BJ (cell line): ENCODE measurements at regions of chr18 and their contacts with region 1.

Region 1: GRCh38 chr18:59988098-59988706 is 88.4 kb downstream of the PMAIP1 start:
- DNase-seq: no peak
- H3K4me3 ChIP-seq: no peak overlapping the region
- H3K27me3 ChIP-seq: no peaks in the 10 kb centered on the region; the same call in 1 of the 2 replicates
- CTCF ChIP-seq: peak; percentile 90

Region 2: DNA sequence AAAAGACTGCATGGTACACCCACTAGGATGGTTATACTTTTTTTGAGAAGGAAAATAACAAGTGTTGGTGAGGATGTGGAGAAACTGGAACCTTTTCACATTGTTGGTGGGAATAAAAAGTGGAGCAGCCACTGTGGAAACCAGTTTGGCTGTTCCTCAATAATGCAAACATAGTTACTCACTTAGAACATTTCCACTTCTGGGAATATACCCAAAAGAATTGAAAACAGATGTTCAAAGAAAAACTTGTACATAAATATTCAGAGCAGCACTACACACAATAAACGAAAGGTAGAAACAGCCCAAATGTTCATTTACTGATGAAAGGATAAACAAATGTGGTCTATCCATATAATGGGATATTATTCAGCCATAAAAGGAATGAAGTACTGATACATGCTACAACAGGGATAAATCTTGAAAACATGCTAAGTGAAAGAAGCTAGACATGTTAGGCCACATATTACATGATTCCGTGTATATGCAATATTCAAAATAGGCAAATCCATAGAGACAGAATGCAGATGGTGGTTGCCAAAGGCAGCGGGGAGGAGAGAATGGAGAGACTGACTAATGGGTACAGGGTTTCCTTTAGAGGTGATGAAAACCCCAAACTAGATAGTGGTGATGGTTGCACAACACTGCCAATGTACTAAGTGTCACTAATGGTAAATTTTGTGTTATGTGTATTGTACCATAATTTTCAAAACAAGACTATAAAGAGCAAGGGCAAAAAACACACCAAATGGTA is 608.3 kb before region 1 on chr18:
- CTCF ChIA-PET with region 1: no interaction called
- POLR2A ChIA-PET with region 1: no interaction called
- DNase-seq: no peak
- H3K4me3 ChIP-seq: no peak overlapping the region
- H3K27me3 ChIP-seq: 0 out of 2 replicates have a peak, but pooled peaks cover 1% of the 10 kb centered on the region
- CTCF ChIP-seq: no peak

Region 3: GRCh38 chr18:60019463-60019840 is 31.2 kb after region 1 on chr18:
- CTCF ChIA-PET with region 1: no interaction called
- POLR2A ChIA-PET with region 1: no interaction called
- DNase-seq: peak; percentile 59
- H3K4me3 ChIP-seq: no peak overlapping the region
- H3K27me3 ChIP-seq: no peaks in the 10 kb centered on the region
- CTCF ChIP-seq: no peak

Region 4: GRCh38 chr18:60549338-60549960 is 561.2 kb after region 1 on chr18:
- CTCF ChIA-PET with region 1: interaction called, 93 read pairs
- POLR2A ChIA-PET with region 1: no interaction called
- DNase-seq: peak; percentile 22
- H3K4me3 ChIP-seq: no peak overlapping the region
- H3K27me3 ChIP-seq: no peaks in the 10 kb centered on the region
- CTCF ChIP-seq: peak; percentile 73

Region 5: DNA sequence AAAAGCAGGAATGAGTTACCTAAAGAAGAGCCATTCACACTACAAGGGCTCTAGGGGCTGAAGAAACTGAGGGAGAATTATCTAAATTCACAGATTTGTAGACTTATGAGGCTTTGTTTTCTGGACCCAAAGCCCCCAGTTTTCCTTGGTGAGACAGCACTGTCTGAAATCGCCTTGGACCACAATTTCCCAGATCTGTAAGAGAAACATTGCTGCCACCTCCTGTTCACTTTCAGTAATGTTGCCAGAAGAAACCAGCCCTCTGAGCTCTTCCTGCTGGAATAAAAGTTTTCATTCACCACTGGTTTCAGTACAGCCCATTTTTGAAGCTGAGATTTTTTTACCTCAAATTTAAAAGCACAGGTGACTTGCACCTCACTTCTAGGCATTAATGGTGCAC is 1514.3 kb after region 1 on chr18:
- CTCF ChIA-PET with region 1: interaction called, 29 read pairs
- POLR2A ChIA-PET with region 1: no interaction called
- DNase-seq: peak; percentile 7
- H3K4me3 ChIP-seq: no peak overlapping the region
- H3K27me3 ChIP-seq: no peaks in the 10 kb centered on the region
- CTCF ChIP-seq: peak; percentile 74